ENCODE measurements at regions of chr13 and their contacts with region 1.

Region 1: DNA sequence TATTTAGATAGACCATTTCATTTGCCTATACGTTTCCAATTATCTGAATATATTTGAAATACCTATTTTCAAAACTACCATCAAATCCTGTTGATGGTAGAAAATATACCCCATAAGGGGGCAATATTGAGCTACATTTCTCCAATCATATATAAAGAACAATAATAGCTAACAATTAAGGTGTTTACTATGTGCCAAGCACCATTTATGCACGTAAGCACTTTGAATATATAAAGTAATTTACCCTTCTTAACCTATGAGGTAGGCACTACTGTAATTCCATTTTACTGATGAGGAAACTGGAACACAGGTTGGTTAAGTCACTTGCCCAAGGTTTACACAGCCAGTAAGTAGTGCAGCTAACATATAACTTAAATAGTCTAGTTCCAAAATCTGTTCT is 79.2 kb downstream of the UBL3 start:
- DNase-seq: no peak
- ATAC-seq: peak in 1 of 4 donors; percentile 14
- H3K4me3 ChIP-seq: no peak overlapping the region
- H3K27ac ChIP-seq: no peak overlapping the region
- H3K4me1 ChIP-seq: no peaks in the 10 kb centered on the region
- H3K27me3 ChIP-seq: no peaks in the 10 kb centered on the region
- CTCF ChIP-seq: peak; percentile 22 to 68 (median 54)
- POLR2A ChIP-seq: no peak

Region 2: GRCh38 chr13:29844441-29844840 is 73.2 kb after region 1 on chr13:
- intact Hi-C with region 1: loop called in 7 of 10 experiments (anchors 5 to 10 kb)
- DNase-seq: no peak
- ATAC-seq: no peak
- H3K4me3 ChIP-seq: no peak overlapping the region
- H3K27ac ChIP-seq: no peak overlapping the region
- H3K4me1 ChIP-seq: peaks cover 0 to 61% (median 31%) of the 10 kb centered on the region in 12 donors
- H3K27me3 ChIP-seq: no peaks in the 10 kb centered on the region
- CTCF ChIP-seq: no peak
- POLR2A ChIP-seq: no peak

Region 3: DNA sequence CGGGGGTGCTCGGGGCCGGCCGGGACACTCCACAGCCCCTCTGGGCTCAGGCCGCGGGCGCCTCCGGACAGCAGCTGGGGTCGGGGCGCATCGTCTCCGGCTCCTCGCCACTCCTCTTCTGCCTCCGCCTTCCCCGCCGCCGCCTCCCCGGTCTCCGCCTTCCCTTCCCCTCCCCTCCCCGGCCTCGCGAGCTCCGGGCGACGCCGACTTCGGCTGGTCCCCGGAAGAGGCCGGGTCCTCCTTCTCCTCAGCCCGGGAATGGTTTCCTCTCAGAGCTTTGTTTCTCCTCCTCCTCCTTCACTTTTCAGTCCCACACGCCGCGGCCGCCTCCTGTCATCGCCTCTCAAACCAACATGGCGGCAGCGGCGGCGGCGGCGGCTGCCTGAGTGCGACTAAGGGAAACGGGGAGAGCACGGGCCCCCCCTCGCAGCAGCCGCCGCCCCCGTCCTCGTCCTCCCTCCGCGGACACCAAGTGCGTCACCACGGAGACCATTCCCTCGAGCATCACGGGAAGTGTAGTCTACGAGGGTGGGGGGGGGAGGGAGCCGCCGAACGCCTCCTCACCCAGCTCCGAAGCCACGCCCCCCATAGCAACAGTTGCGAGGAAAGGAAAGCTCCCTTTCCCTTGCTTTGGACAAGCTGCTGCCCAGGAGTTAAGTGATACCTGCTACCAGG is 79.1 kb after region 1 on chr13 and contains the start of gene UBL3:
- intact Hi-C with region 1: loop called in 6 of 10 experiments (anchors 5 to 10 kb)
- DNase-seq: peak; percentile 97
- ATAC-seq: peak; percentile 96 to 98 (median 98)
- H3K4me3 ChIP-seq: peak within 1 kb of the TSS; percentile 64 to 96 (median 89)
- H3K27ac ChIP-seq: peak within 1 kb of the TSS; percentile 96 to 99 (median 98)
- H3K4me1 ChIP-seq: peaks cover 0 to 29% (median 19%) of the 10 kb centered on the region in 12 donors
- H3K27me3 ChIP-seq: no peaks in the 10 kb centered on the region
- CTCF ChIP-seq: no peak
- POLR2A ChIP-seq: peak in 1 of 2 donors; percentile 77
- total RNA-seq, gene UBL3: 19.0 to 27.7 (median 21.2) TPM

Region 4: DNA sequence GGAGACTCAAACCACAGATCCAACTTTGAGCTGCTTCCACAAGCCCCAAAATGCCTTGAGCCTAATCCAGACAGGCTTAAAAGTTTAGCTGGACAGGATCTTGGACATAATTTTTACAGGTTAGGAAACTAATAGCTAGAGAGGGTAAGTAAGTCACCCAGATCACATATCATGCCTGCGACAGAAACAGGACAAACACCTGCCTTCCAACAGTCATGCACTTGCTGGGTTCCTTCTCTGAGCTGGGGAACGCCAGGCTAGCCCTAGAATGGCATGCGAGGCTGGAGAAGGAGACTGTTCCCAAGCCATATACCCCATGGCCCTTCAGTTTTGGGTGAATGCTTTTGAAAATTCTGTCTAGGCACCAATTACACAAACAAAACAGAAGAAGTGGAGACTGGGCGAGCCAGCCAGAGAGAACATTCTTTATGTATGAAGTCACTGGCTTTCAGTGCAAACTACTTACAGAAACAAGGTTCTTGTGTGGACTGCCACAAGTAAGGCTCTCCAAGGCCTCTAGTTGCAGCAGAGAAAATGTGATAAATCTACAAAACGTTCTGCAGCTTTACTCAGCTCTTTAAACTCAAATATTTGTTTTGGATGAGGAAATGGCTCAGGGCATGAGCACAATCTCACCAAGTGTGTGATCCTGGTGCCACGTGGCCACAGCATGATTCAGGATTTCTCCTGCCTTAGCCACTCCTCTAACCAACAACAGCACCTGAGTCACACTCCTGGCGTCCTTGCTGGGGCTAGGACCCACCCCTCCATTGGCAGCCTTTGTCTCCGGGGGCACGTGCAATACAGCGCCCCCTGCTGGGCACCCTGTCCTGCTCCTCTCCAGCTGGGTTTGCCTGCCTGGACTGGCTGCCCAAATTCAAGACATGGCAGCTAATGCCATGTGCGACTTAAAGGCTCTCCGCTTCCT is 152.6 kb after region 1 on chr13:
- intact Hi-C with region 1: loop called in 4 of 10 experiments (anchors 5 to 10 kb)
- DNase-seq: peak; percentile 40 to 79 (median 71)
- ATAC-seq: peak; percentile 72 to 84 (median 80)
- H3K4me3 ChIP-seq: no peak overlapping the region
- H3K27ac ChIP-seq: peak overlapping the region in 11 of 12 donors; percentile 28 to 81 (median 56)
- H3K4me1 ChIP-seq: peaks cover 0 to 35% (median 26%) of the 10 kb centered on the region in 12 donors
- H3K27me3 ChIP-seq: no peaks in the 10 kb centered on the region
- CTCF ChIP-seq: peak; percentile 62 to 84 (median 68)
- POLR2A ChIP-seq: no peak

Measured in heart left ventricle (tissue), 16 donors.